HEK293 (cell line): ENCODE measurements at regions of chr3 and their contacts with region 1.

Region 1: GRCh38 chr3:25441234-25441856 is 13.3 kb downstream of the RARB start:
- H3K4me3 ChIP-seq: no peak overlapping the region
- H3K27ac ChIP-seq: no peak overlapping the region
- H3K4me1 ChIP-seq: no peaks in the 10 kb centered on the region; the same call in 1 of the 2 replicates
- CTCF ChIP-seq: peak; percentile 46

Region 2: DNA sequence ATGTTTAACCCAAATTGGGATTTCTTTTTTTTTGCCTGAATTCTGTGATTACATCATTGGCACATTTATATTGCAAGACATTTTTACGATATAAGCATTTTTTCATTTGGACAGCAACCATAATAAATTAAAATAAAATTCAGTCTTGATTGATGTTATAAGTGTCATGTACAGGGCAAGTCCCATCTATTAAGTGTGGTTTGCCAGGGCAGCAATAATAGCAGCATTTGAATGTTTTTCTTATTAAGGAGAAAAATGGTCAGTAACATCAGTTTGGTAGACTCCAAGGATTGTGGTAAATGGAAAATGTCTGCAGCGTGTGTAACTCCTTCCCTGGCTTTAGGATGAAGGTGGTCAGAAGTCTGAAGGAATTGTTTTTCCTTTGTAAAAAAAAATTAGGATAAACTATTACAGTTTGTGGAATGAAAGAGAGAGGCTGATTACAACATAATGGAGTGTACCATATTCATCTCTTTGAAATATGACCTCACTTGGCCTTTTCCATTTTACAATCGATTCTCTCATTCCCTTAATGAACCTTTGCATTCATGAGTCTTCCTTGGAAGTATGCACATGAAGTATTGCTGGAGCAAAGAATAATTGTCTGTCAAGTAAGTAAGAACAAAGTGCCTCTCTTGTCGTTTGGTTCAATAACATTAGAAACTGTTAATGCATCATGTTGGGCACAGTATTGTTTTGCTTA is 541.3 kb before region 1 on chr3:
- CTCF ChIA-PET with region 1: no interaction called
- POLR2A ChIA-PET with region 1: no interaction called
- H3K4me3 ChIP-seq: no peak overlapping the region
- H3K27ac ChIP-seq: no peak overlapping the region
- H3K4me1 ChIP-seq: no peaks in the 10 kb centered on the region
- CTCF ChIP-seq: no peak

Region 3: GRCh38 chr3:25427942-25428788 is 13.2 kb before region 1 on chr3 and contains the start of gene RARB:
- CTCF ChIA-PET with region 1: interaction called, 12 read pairs
- POLR2A ChIA-PET with region 1: no interaction called
- H3K4me3 ChIP-seq: peak within 1 kb of the TSS; percentile 56
- H3K27ac ChIP-seq: peak within 1 kb of the TSS; percentile 98
- H3K4me1 ChIP-seq: peaks cover 11% of the 10 kb centered on the region
- CTCF ChIP-seq: no peak

Region 4: GRCh38 chr3:25594007-25594502 is 152.7 kb after region 1 on chr3:
- CTCF ChIA-PET with region 1: interaction called, 11 read pairs
- POLR2A ChIA-PET with region 1: no interaction called
- H3K4me3 ChIP-seq: no peak overlapping the region
- H3K27ac ChIP-seq: no peak overlapping the region
- H3K4me1 ChIP-seq: no peaks in the 10 kb centered on the region
- CTCF ChIP-seq: no peak